Activated T-helper 2 cell treated with anti-CD3 and anti-CD28 coated beads, Interferon-gamma antibody, Interleukin-2, Interleukin-4, amounts not matched to agents 10 μg/mL and 5 μg/mL and 100 μg/mL, durations not matched to agents 14 hours and 24 hours and 36 hours (primary cell): ENCODE measurements at regions of chr9 and their contacts with region 1.

Region 1: DNA sequence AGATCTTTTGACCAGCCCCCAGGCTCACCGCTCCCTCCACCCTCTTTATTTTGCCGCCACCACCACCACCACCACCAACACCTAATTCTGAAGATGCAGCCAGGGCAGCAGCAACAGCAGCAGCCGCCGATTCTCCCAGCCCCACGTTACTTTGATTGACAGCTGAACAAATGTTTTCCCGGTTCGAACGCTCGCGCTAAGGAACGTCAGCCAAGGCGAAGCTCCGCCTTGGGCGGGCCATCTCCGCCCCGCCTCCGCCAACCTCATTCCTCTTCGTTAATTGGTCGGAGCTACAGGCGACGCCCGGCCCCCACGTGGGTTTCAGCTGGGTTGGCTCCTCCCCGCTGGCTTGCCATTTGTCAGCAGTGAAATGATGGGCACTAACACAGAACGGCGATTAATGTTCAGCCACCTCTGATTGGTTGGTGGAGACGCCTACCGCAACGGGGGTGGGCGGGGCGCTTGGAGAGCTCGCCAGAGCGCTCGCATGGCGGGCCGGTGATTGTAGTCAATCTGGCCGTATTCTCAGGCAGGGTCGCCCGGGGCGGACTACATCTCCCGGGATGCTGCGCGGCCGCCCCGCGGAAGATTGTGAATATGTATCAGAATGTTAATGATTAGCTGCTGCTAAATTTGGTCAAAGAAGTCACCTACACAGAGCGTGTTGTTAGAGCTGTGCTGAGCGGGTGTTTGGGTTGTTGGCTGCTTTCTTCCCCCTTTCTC is at the start of gene TLE4:
- DNase-seq: peak; percentile 99
- H3K4me3 Mint-ChIP-seq: peak within 1 kb of the TSS; percentile 65
- H3K27ac Mint-ChIP-seq: no peak within 1 kb of the TSS
- H3K4me1 Mint-ChIP-seq: peaks cover 26% of the 10 kb centered on the region
- H3K27me3 Mint-ChIP-seq: peaks cover 7% of the 10 kb centered on the region
- total RNA-seq, gene TLE4: 20.7 and 21.7 TPM in 2 replicates

Region 2: DNA sequence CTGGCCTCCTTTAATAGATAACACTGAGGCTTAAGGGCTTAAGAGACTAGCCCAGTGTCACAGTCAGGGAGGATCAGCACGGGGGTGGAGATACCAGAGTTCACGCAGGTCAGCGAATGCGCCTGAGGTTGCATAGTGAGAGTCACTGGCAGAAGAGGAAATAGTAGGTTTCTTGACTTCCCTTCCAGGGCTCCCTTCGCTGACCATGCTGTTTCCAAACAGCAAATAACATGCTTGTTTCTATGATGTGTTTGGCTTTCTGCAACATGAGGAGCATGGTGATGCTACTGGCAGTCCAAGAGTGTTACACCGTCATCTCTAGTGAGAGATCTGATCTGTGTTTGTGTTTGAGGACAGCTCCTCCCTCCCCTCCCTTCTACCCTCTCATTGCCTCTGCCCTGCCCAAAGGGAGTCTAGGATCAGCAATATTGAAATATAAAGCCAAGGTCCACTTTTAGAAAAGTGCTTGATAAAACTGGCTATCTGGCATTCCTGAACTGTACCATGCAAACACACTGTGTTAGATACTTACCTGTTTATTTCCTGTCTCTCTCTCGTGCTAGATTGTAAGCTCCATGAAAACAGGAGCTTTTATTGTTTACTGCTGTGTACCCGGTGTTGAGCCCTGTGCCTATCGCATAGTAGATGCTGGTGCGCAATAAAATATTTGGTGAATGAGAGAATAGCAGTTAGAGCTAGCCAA is 12.6 kb after region 1 on chr9:
- intact Hi-C with region 1: loop called (anchors 1 kb)
- DNase-seq: no peak
- H3K4me3 Mint-ChIP-seq: no peak overlapping the region
- H3K27ac Mint-ChIP-seq: no peak overlapping the region
- H3K4me1 Mint-ChIP-seq: peaks cover 66% of the 10 kb centered on the region
- H3K27me3 Mint-ChIP-seq: no peaks in the 10 kb centered on the region

Region 3: GRCh38 chr9:79623799-79624721 is 52.6 kb after region 1 on chr9:
- intact Hi-C with region 1: loop called (anchors 1 kb)
- DNase-seq: no peak
- H3K4me3 Mint-ChIP-seq: peak overlapping the region; percentile 57
- H3K27ac Mint-ChIP-seq: peak overlapping the region; percentile 81
- H3K4me1 Mint-ChIP-seq: peaks cover 30% of the 10 kb centered on the region
- H3K27me3 Mint-ChIP-seq: no peaks in the 10 kb centered on the region

Region 4: DNA sequence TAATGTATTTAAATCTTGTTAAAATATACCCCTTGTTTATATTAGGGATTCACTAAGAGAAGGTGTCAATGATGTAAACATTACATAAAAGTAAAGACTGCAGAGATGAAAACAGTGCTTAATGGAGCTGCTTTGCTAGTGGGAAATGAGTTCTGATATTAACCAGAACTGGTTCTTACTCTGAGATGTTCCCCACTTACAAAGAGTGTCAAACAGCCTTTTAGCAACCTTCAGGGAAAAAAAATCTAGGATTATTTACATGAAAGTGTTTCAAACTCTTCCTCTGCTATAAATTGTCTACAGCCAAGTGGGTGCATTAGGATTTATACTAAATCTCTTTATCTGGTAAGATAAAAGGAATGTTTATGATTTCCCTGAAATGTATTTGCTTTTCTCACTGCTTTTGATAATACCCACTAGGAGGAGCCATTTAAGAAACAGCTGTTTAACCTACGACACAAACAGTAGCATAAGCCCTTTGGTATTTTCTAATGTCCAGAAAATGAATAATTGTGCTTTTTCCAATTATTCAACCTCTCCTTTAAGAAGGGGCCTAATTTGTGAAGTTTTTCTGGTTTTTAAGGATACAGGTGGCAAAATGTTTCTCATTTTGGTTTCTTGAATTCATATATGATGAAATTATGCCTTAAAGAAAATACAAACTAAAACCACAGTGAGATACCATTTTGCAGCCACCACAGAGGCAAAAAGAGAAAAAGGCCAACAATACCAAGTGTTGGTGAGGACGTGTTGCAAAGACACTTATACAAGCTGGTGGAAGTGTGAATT is 186.6 kb after region 1 on chr9:
- intact Hi-C with region 1: loop called (anchors 5 kb)
- DNase-seq: no peak
- H3K4me3 Mint-ChIP-seq: no peak overlapping the region
- H3K27ac Mint-ChIP-seq: no peak overlapping the region
- H3K4me1 Mint-ChIP-seq: peaks cover 21% of the 10 kb centered on the region
- H3K27me3 Mint-ChIP-seq: peaks cover 2% of the 10 kb centered on the region

Region 5: DNA sequence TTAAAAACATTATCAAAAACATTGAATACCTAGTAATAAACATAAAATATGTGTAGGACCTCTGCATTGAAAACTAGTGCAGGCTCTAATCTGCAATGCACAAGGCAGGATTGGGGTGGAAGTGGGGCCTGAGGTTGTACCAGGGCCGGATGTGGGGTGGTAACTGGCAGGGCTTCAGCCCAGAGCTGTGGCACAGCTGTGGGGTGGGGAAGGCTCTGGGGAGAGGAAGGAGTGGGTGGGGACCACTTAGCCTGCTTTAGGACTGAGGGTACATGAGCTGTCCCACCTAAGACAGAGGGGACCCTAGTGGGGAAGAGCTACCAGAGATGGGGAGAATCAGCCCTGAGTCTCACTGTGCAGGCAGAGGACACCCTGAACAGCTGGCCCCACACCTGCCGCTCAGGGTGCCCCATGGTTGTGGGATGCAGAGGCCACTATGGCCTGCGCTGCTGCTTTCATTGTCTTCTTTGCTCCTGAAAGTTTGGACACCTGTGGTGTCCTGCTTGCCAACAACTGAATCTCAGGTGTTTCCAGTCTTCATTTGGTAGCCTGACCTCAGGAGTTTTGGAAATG is 311.7 kb after region 1 on chr9:
- intact Hi-C with region 1: loop called (anchors 5 kb)
- DNase-seq: peak; percentile 25
- H3K4me3 Mint-ChIP-seq: no peak overlapping the region
- H3K27ac Mint-ChIP-seq: no peak overlapping the region
- H3K4me1 Mint-ChIP-seq: peaks cover 40% of the 10 kb centered on the region
- H3K27me3 Mint-ChIP-seq: peaks cover 3% of the 10 kb centered on the region

Region 6: DNA sequence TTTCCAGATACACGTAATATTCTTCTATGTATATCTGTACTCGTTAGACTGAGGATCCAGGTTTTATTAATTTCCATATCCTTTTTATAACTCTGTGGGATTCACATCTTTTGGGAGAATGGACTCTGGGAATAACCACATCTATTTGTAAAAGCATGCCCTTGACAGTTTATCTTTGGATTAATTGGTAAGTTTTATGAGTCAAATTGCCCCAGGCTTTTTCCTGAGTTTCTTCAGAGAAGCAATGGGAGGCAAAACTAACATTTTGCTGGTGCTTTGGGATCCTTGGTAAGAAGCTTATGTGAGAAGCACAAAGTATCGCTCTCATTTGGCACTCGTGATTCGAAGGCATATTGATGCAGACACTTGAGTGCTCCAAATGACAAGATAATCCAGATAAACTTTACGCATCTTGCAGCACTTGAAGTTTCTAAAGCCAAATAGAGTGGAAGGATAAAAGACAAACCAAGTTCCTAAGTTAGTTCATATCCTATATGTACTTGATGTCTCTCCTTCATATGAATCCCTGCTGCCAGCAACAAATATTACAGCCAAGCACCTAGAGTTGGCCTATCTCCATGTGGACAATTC is 325.0 kb after region 1 on chr9:
- intact Hi-C with region 1: no loop called
- DNase-seq: no peak
- H3K4me3 Mint-ChIP-seq: no peak overlapping the region
- H3K27ac Mint-ChIP-seq: no peak overlapping the region
- H3K4me1 Mint-ChIP-seq: peaks cover 2% of the 10 kb centered on the region
- H3K27me3 Mint-ChIP-seq: peaks cover 7% of the 10 kb centered on the region